ENCODE measurements at regions of chrX and their contacts with region 1.

Region 1: GRCh38 chrX:46704767-46705386 is 54.0 kb downstream of the SLC9A7 start:
- DNase-seq: peak; percentile 49
- H3K4me3 Mint-ChIP-seq: peak overlapping the region; percentile 62
- H3K27ac Mint-ChIP-seq: peak overlapping the region; percentile 94
- H3K4me1 Mint-ChIP-seq: peaks cover 54% of the 10 kb centered on the region
- H3K27me3 Mint-ChIP-seq: no peaks in the 10 kb centered on the region

Region 2: DNA sequence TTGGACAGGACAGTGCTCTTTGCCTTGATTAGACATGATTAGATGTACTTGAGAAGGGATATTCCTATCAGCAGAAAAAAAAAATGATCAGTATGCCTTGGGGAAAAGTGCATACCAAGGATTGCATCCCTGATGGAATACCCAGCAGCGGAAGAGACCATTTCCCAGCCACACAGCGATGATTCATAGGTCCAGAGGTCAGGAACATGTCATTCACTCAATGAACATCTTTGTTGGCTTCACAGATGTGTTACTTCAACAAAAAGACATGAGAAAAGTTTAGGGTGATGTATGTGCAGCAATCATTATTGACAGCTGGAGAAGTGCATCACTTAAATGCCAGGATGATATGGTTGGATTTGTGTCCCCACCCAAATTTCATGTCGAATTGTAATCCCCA is 453.1 kb before region 1 on chrX:
- CTCF ChIA-PET with region 1: no interaction called
- POLR2A ChIA-PET with region 1: no interaction called
- intact Hi-C with region 1: no loop called
- DNase-seq: no peak
- H3K4me3 Mint-ChIP-seq: no peak overlapping the region
- H3K27ac Mint-ChIP-seq: no peak overlapping the region
- H3K4me1 Mint-ChIP-seq: peaks cover 2% of the 10 kb centered on the region
- H3K27me3 Mint-ChIP-seq: no peaks in the 10 kb centered on the region

Region 3: DNA sequence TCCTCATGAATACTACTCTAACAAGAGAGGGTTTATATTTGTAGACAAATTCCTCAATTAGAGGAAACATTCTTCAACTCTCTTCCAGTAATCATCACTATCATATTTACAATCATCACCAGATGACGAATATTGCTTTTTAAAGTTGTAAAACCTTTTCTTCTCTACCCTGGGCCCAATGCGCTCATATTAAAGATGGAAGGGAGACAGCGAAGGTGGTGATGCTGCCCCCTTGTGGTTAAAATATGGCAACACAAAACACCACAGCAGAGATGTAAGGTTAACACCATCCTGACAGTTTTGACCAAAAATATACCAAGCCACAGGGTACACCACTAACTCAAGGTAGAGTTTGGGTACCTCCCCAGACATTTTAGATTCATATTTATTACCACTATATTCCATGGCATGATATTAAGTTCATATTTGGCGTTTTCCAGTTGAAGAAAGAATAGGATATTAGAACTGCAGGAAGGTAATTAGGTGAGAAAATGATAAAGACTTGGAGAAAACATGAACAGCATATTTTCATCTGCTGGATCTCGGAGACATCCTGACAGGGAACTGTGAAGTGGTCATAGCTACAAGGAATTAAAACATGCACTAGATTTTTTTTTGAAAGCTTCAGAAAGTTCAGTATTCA is 18.8 kb before region 1 on chrX:
- CTCF ChIA-PET with region 1: interaction called, 5 read pairs
- POLR2A ChIA-PET with region 1: no interaction called
- intact Hi-C with region 1: loop called (anchors 2 kb)
- DNase-seq: peak; percentile 52
- H3K4me3 Mint-ChIP-seq: no peak overlapping the region
- H3K27ac Mint-ChIP-seq: no peak overlapping the region
- H3K4me1 Mint-ChIP-seq: peaks cover 14% of the 10 kb centered on the region
- H3K27me3 Mint-ChIP-seq: no peaks in the 10 kb centered on the region

Measured in activated CD4-positive, alpha-beta memory T cell treated with anti-CD3 and anti-CD28 coated beads for 36 hours (primary cell).